ENCODE measurements at regions of chr12 and their contacts with region 1.

Region 1: DNA sequence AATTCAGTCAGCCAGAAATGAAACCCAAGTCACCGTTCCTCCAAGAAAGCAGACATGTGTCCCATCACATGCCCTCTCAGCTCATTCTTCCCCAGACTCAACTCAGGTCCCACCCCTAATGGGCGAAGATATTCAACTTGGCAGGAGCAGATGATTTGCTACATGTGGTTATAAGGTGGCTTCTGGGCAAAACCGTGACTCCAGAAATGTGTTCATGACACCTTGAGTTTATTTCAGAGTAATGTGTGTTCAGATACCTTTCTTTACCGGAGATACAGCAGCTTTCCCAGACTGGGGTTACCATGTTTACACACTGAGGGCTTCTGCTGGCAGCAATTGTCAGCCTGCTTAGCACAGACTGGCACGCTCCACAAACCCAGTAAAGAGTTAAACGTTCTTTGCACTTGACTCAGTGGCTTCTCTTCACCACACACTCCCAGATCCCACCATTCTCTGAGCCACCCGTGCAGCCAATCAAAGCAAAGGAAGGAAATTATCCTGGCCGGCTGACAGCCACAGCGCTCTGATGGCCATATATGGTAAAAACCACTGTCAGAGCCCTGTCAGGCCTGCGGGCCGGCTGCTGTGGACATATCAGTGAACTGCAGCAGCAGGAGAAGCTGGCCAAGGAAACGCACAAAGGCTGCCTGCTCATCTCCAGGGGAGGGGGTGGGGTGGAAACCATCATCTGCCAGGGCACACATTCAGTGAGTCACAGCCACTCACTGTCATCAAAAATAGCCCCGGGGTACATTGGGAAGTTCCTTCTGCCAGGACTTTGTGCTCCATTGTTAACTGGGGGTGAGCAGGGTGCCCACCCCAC is 39.9 kb downstream of the CORO1C start:
- DNase-seq: peak; percentile 99
- H3K4me3 ChIP-seq: peak overlapping the region in 1 of 3 experiments; percentile 7
- H3K27ac ChIP-seq: peak overlapping the region; percentile 89
- H3K4me1 ChIP-seq: peaks cover 49% of the 10 kb centered on the region
- H3K27me3 ChIP-seq: no peaks in the 10 kb centered on the region
- CTCF ChIP-seq: peak in 1 of 2 donors; percentile 31
- POLR2A ChIP-seq: peak; percentile 56

Region 2: DNA sequence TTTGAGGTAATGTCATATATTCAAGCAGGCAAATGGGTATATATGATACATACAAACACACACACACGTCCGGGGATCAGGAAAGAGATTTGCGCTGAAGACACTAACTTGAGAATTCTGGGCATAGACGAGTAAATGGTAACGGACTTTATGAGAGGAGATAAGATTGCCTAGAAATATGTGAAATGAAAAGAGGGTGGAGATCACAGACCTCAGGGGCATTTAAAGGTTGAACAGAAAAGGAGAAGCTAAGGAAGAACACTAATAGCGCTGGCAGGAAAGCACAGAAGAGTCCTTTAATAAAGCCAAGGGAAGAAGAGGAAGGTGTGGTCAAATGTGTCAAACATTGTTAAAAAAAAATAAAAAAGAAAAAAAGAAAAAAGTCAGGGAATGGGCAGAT is 1611.1 kb before region 1 on chr12:
- CTCF ChIA-PET with region 1: no interaction called
- POLR2A ChIA-PET with region 1: no interaction called
- dilution Hi-C with region 1: no loop called
- intact Hi-C with region 1: no loop called
- DNase-seq: no peak
- H3K4me3 ChIP-seq: no peak overlapping the region
- H3K27ac ChIP-seq: no peak overlapping the region
- H3K4me1 ChIP-seq: no peaks in the 10 kb centered on the region
- H3K27me3 ChIP-seq: no peaks in the 10 kb centered on the region
- CTCF ChIP-seq: no peak
- POLR2A ChIP-seq: no peak

Region 3: GRCh38 chr12:107884769-107885694 is 806.4 kb before region 1 on chr12:
- CTCF ChIA-PET with region 1: no interaction called
- POLR2A ChIA-PET with region 1: no interaction called
- dilution Hi-C with region 1: no loop called
- intact Hi-C with region 1: no loop called
- DNase-seq: peak; percentile 54
- H3K4me3 ChIP-seq: no peak overlapping the region
- H3K27ac ChIP-seq: no peak overlapping the region
- H3K4me1 ChIP-seq: no peaks in the 10 kb centered on the region
- H3K27me3 ChIP-seq: no peaks in the 10 kb centered on the region
- CTCF ChIP-seq: peak; percentile 56 to 74
- POLR2A ChIP-seq: no peak

Region 4: GRCh38 chr12:108722992-108723766 is 31.8 kb after region 1 on chr12:
- CTCF ChIA-PET with region 1: interaction called, 5 read pairs
- POLR2A ChIA-PET with region 1: interaction called, 11 read pairs
- dilution Hi-C with region 1: no loop called
- intact Hi-C with region 1: loop called (anchors 2 kb)
- DNase-seq: peak; percentile 65
- H3K4me3 ChIP-seq: peak overlapping the region in 1 of 3 experiments; percentile 17
- H3K27ac ChIP-seq: peak overlapping the region; percentile 83
- H3K4me1 ChIP-seq: peaks cover 47% of the 10 kb centered on the region
- H3K27me3 ChIP-seq: no peaks in the 10 kb centered on the region
- CTCF ChIP-seq: no peak
- POLR2A ChIP-seq: no peak

Region 5: DNA sequence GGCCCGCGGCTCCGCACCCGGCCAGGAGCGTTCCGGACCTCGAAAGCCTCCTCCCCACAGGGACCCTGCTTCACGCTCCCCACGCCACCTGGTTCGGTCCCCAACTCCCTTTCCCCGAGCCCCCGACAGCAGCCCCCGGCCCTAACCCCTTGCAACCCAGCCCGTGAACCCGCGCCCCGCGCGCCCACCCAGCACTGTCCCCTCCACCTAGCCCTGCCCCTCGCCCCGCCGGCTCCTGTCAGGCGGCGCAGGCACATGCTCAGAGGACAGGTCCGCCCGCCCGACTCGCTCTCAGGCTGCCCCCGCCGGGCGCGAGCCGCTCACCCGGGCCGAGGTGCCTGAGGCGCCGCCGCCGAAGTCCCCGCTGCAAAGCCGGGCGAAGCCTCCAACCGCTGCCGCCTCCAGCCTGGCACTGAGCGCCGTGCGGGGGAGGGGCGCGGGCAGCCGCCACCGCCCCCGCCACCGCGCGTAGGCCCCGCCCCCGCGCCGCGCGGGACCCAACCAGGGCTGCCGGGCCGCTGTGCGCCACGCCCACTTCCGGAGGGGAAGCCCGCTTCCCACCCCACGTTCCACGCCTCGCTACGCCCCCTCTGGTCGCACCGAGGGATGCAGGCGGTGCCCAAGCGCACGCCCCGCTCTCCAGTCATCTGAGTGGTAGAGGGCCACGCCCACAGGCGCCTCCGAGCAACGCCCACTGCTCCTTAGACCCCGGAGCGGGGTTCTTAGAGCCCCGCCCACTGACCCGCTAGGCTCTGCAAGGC is 39.9 kb after region 1 on chr12 and contains the start of gene CORO1C:
- CTCF ChIA-PET with region 1: interaction called, 12 read pairs
- POLR2A ChIA-PET with region 1: interaction called, 8 read pairs
- dilution Hi-C with region 1: no loop called
- intact Hi-C with region 1: loop called (anchors 1 kb)
- DNase-seq: peak; percentile 99
- H3K4me3 ChIP-seq: peak within 1 kb of the TSS; percentile 57 to 91 (median 76)
- H3K27ac ChIP-seq: peak within 1 kb of the TSS; percentile 92
- H3K4me1 ChIP-seq: peaks cover 29% of the 10 kb centered on the region
- H3K27me3 ChIP-seq: no peaks in the 10 kb centered on the region
- CTCF ChIP-seq: peak; percentile 89 to 95
- POLR2A ChIP-seq: peak; percentile 93
- total RNA-seq, gene CORO1C: 212 and 240 TPM in 2 replicates

Region 6: DNA sequence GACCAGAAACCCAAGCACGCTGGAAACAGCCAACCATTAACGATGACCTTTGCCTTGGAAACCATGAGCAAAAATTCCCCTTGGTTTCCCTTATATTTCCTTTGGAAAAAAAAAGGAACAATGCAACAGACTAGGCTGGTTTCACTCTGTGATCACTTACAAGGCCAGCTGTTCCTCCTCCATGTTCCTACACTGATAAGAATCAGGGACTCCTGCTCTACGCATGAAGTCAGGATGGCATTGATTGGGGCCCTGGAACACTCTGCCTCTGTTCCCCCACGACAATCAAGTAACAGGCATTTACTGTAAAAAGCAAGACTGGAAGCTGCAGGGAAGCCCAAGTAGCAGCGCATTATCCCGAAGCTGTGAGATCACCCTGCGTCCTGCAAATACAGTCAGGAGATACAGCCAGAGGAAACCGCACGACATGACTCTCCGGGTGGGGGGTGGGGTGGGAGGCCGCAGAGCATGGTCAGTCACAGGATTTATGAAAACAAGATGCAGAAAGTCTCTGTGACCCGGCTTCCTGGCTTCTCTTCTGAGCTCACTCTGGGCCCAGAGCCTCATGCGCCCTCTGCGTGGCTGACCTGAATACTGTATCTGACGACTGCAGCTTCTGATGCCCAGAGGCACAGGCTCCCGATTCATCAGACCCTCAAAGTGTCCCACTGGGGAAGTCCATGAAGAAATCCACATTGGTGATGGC is 134.9 kb after region 1 on chr12:
- CTCF ChIA-PET with region 1: no interaction called
- POLR2A ChIA-PET with region 1: interaction called, 14 read pairs
- dilution Hi-C with region 1: no loop called
- intact Hi-C with region 1: loop called (anchors 1 kb)
- DNase-seq: peak; percentile 98
- H3K4me3 ChIP-seq: peak overlapping the region in 1 of 3 experiments; percentile 49
- H3K27ac ChIP-seq: peak overlapping the region; percentile 100
- H3K4me1 ChIP-seq: peaks cover 71% of the 10 kb centered on the region
- H3K27me3 ChIP-seq: no peaks in the 10 kb centered on the region
- CTCF ChIP-seq: peak in 1 of 2 donors; percentile 23
- POLR2A ChIP-seq: peak; percentile 31

Region 7: DNA sequence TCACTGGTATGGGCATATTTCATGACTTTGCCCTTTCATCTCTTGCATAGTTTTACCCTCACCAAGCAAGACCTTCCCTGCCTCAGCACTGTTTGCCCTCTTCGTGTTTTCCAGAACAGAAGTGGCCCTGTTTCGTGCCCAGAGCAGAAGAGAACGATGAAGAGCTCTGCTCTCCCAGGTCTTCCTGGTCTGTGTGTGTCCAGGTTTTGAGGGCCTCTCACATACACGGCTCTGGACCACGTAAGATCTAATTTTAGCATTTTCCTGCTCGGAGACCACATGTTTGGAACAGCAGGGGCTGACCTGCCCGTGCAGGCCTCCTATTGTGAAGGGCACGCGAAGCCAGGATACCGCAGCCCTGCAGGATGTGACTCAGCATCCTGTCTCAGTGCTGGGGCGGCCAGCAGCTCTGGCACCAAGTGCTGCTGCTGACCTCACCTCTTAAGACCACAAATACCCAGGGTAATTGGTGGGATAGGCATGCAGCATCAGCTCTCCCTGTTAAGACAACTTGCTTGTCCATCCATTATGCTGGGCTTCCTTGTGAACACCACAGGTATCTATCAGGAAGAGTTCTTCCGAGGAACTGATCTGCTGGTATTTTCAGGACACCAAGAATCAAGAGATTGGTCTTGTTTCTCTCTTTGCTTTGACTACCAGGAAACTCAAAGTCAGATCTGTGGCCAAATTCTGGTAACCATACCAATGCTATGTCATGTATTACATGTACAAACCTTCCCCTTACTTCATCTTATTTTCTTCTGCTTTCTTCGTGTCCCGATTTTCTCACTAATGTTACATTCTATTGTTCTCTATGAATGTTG is 147.0 kb after region 1 on chr12:
- CTCF ChIA-PET with region 1: interaction called, 4 read pairs
- POLR2A ChIA-PET with region 1: no interaction called
- dilution Hi-C with region 1: no loop called
- intact Hi-C with region 1: loop called (anchors 1 kb)
- DNase-seq: peak; percentile 100
- H3K4me3 ChIP-seq: peak overlapping the region in 1 of 3 experiments; percentile 16
- H3K27ac ChIP-seq: peak overlapping the region; percentile 98
- H3K4me1 ChIP-seq: peaks cover 70% of the 10 kb centered on the region
- H3K27me3 ChIP-seq: no peaks in the 10 kb centered on the region
- CTCF ChIP-seq: no peak
- POLR2A ChIP-seq: peak; percentile 79